BJ (cell line): ENCODE measurements at regions of chr11 and their contacts with region 1.

Region 1: DNA sequence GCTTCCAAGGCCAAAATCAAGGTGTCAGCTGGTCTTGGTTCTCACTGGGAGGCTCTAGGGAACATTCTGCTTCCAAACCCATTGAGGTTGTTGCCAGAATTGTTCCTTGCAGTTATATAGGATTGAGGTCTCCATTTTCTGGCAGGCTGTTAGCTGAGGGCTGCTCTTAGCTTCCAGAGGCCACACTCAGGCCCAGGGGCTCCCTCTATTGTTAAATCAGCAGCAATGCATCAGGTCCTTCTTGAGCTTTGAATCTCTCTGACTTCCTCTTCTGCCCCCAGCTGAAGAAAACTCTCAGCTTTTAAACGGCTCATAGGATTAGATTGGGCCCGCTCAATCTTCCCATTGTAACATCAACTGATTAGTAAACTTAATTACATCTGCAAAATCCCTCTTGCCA is 39.3 kb upstream of the BSX start:
- DNase-seq: no peak
- H3K4me3 ChIP-seq: no peak overlapping the region
- H3K27me3 ChIP-seq: peaks cover 4% of the 10 kb centered on the region
- CTCF ChIP-seq: peak; percentile 81

Region 2: DNA sequence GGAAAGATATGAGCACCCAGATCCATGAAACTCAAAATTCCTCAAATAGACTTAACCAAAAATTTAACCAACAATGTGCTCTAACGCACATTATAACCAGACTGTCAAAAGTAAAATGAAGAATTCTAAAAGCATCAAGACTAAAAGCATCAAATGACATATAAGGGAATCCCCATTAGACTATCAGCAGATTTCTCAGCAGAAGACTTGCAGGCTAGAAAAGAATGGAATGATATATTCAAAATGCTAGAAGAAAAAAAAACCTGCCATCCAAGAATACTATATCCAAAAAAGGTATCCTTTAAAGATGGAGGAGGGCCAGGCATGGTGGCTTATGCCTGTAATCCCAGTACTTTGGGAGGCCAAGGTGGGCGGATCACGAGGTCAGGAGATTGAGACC is 482.9 kb before region 1 on chr11:
- CTCF ChIA-PET with region 1: no interaction called
- POLR2A ChIA-PET with region 1: no interaction called
- DNase-seq: no peak
- H3K4me3 ChIP-seq: no peak overlapping the region
- H3K27me3 ChIP-seq: peaks cover 4% of the 10 kb centered on the region; the same call in 1 of the 2 replicates
- CTCF ChIP-seq: no peak

Region 3: GRCh38 chr11:122578168-122578825 is 442.7 kb before region 1 on chr11:
- CTCF ChIA-PET with region 1: interaction called, 12 read pairs
- POLR2A ChIA-PET with region 1: no interaction called
- DNase-seq: no peak
- H3K4me3 ChIP-seq: no peak overlapping the region
- H3K27me3 ChIP-seq: no peaks in the 10 kb centered on the region
- CTCF ChIP-seq: peak; percentile 37; the same call in 1 of the 2 replicates

Region 4: DNA sequence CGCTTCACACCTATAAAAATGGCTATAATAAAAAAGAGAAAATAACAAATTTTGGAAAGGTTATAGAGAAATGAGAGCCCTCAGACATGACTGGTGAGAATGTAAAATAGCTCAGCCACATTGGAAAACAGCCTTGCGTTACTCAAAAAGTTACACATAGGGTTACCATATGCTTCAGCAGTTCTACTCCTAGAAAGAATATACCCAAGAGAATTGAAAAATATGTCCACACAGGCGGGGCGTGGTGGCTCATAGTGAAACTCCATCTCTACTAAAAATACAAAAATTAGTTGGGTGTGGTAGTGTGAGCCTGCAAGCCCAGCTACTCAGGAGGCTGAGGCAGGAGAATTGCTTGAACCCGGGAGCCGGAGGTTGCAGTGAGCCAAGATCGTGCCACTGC is 146.0 kb before region 1 on chr11:
- CTCF ChIA-PET with region 1: interaction called, 321 read pairs
- POLR2A ChIA-PET with region 1: no interaction called
- DNase-seq: no peak
- H3K4me3 ChIP-seq: no peak overlapping the region
- H3K27me3 ChIP-seq: peaks cover 2% of the 10 kb centered on the region; the same call in 1 of the 2 replicates
- CTCF ChIP-seq: no peak

Region 5: DNA sequence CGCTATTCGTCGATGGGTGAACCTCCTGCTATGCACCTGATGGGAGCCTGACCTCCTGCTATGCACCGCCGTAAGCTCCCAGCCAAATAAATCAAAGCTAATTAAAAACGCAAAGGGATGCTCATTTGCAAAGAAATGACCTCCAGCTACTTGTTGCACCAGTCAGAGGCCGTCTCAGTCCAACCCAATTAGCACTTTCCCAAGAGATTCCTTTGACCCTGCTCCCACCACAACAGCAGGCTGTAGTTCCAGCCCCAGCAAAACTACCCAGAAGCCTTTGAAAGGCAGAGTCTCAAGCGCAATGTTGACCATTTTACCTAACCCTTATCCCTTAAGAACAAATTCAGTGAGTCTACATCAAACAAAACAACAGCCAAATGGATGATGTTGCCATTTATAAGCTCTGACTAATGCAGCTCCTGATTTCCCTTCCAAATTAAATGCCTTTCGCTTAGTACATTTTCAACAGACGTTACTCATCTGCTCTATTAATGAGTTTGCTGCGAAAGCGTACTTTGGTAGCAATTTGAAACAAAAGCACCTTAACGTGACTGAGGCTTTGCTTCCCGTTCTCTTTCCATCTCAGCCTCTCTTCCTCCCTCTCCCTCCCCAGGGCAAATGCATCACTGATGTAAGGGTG is 22.1 kb before region 1 on chr11:
- CTCF ChIA-PET with region 1: interaction called, 11 read pairs
- POLR2A ChIA-PET with region 1: no interaction called
- DNase-seq: peak; percentile 19
- H3K4me3 ChIP-seq: no peak overlapping the region
- H3K27me3 ChIP-seq: 0 out of 2 replicates have a peak, but pooled peaks cover 2% of the 10 kb centered on the region
- CTCF ChIP-seq: no peak

Region 6: GRCh38 chr11:123033895-123034294 is 12.9 kb after region 1 on chr11:
- CTCF ChIA-PET with region 1: interaction called, 26 read pairs
- POLR2A ChIA-PET with region 1: no interaction called
- DNase-seq: no peak
- H3K4me3 ChIP-seq: no peak overlapping the region
- H3K27me3 ChIP-seq: no peaks in the 10 kb centered on the region
- CTCF ChIP-seq: peak; percentile 17; the same call in 1 of the 2 replicates

Region 7: DNA sequence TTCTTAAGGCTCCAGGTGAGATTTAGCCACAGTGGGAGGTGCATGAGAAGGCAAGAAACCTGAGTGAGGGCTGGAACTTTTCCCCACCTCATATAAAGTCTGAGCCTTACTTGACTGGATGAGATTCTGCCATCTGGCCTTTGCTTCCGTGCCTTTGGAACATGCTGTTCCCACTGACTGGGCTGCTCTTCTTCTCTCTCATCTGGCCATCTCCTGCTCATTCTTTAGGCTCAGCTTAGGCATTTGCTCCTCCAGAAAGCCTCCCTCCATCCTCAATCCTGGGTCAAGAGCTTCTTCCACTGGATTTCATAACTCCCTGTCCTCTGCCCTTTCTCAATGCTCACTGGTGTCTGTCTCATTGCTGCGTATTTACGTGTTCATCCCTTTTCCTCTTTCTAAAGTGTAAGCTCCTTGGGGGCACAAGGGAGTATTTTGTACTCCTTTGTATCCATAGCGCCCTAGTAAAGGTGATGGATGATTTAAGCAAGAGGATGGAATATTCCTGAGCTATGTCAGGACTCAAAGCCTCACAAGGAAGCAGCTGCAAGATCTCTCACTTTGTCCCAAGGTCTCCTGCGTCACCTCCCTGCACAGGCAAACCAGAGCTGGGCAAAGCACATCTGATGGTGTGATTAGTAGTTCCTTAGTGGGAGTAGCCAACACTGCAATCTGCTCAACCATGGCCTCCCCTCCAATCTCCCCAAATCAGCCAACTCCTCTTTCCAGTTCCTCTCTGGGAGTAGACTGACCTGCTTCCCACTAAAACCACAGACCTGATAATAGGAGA is 25.7 kb after region 1 on chr11:
- CTCF ChIA-PET with region 1: interaction called, 30 read pairs
- POLR2A ChIA-PET with region 1: no interaction called
- DNase-seq: no peak
- H3K4me3 ChIP-seq: no peak overlapping the region
- H3K27me3 ChIP-seq: no peaks in the 10 kb centered on the region
- CTCF ChIP-seq: no peak

Region 8: GRCh38 chr11:123069908-123070821 is 49.2 kb after region 1 on chr11:
- CTCF ChIA-PET with region 1: no interaction called
- POLR2A ChIA-PET with region 1: no interaction called
- DNase-seq: no peak
- H3K4me3 ChIP-seq: no peak overlapping the region
- H3K27me3 ChIP-seq: no peaks in the 10 kb centered on the region
- CTCF ChIP-seq: no peak

Region 9: DNA sequence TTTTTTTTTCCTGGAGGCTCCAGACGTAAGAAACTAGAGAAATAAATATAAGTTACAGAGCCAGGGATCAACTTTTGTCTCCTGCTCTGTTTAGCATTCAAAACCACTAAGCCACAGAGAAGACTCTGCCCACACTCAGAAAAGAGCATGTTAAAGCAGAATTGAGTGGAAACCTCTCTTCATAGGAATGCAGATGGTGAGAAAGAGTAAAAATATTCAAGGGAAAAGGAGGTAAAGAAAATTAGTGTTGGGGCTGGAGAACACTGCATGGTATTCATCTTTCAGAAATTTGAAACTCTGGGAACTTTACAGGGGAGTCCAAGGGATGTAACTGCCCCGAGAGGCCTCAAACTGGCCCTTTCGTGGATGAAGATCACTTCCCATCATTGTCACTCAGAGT is 109.0 kb after region 1 on chr11:
- CTCF ChIA-PET with region 1: no interaction called
- POLR2A ChIA-PET with region 1: no interaction called
- DNase-seq: peak; percentile 66
- H3K4me3 ChIP-seq: no peak overlapping the region
- H3K27me3 ChIP-seq: no peaks in the 10 kb centered on the region
- CTCF ChIP-seq: no peak